ENCODE measurements at regions of chr11 and their contacts with region 1.

Region 1: DNA sequence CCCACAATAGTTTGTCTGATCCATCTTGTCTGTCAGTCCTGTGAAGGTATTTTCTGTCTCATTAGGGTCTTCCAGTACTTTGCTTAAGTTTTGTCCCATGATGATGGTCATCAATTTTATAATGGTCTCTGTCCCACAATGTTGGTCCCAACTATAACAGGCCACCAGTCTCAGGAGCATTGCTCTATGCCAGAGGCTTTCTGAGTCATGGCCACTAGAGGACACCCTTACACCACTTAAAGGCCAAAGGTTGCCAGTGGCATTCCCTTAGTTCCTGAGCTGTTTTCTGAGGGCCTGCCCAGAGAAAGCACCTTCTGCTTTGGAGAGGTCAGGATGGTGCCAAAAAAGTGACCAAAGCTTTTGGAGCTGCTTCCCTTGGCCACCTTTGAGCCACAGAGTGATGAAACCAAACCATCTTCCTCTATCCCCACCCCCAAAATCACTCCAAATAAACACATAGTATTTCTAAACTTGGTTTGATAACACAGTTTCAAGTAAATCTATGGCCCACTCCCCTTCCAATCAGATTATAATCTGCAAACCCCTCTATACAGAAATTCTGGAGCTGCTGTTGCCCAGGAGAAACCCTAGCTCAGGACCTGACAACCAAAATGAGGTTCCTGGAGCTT is 19.3 kb downstream of the EIF3F start:
- DNase-seq: peak; percentile 44
- H3K4me3 ChIP-seq: no peak overlapping the region
- H3K27ac ChIP-seq: no peak overlapping the region
- H3K27me3 ChIP-seq: peaks cover 5% of the 10 kb centered on the region
- CTCF ChIP-seq: peak; percentile 96

Region 2: DNA sequence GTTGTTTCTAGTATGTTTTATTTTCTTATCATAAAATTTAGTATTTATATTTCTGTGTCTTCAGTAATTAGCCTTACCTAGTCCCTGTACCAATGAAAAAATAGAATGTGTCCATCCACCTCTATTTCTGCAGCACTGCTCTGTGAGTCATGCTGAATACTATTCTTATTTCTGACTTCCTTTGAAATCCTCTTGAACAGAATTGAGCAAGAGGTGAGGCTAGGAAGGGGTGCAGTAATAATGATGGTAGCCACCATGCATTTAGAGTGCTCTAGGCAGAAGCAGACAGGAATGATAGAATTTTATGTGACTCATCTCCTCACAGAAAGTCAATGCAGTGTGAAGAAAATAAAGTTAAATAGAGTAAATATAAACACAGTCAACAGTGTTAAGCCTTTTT is 135.4 kb before region 1 on chr11:
- CTCF ChIA-PET with region 1: no interaction called
- POLR2A ChIA-PET with region 1: no interaction called
- DNase-seq: no peak
- H3K4me3 ChIP-seq: no peak overlapping the region
- H3K27ac ChIP-seq: no peak overlapping the region
- H3K27me3 ChIP-seq: no peaks in the 10 kb centered on the region
- CTCF ChIP-seq: no peak

Region 3: GRCh38 chr11:7986768-7987559 is 19.5 kb before region 1 on chr11 and contains the start of gene EIF3F:
- CTCF ChIA-PET with region 1: interaction called, 15 read pairs
- POLR2A ChIA-PET with region 1: no interaction called
- DNase-seq: peak; percentile 99
- H3K4me3 ChIP-seq: peak within 1 kb of the TSS; percentile 72
- H3K27ac ChIP-seq: peak within 1 kb of the TSS; percentile 53
- H3K27me3 ChIP-seq: no peaks in the 10 kb centered on the region
- CTCF ChIP-seq: peak; percentile 86
- polyA plus RNA-seq, gene EIF3F: 216 and 297 TPM in 2 replicates

Region 4: DNA sequence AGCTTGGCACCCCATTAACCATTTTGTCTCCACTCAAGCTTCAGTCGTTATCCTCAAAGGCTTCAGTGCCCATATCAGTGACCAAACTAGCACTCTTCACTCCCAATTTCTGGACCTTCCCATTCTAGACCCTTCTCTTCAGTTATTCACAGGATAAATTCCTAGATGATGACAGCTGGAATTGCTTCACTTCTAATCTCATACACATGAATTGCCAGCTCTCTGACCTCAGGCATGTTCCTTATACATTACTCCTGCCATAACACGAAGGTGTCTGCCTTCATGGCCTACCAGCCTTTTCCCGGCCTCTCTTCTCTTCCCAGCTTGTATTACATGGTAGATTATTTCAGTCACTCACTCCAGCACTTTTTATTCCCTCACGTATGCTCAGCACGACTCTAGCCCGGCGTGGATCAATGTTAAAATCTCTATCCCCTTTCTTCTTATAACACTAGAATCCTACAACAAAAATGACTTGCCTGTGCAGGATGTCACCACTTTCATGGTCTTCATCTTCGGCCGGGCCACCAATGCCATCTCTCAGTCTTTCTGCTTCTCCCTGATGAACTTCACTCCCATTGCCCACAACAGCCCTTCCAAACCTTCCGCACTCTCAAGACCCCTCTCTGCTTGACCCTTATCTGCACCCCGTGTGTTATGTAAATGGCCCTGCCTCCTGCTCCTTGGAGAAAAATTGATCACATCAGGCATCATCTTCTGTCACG is 17.5 kb after region 1 on chr11:
- CTCF ChIA-PET with region 1: interaction called, 30 read pairs
- POLR2A ChIA-PET with region 1: interaction called, 3 read pairs
- DNase-seq: no peak
- H3K4me3 ChIP-seq: no peak overlapping the region
- H3K27ac ChIP-seq: no peak overlapping the region
- H3K27me3 ChIP-seq: no peaks in the 10 kb centered on the region
- CTCF ChIP-seq: no peak

Region 5: DNA sequence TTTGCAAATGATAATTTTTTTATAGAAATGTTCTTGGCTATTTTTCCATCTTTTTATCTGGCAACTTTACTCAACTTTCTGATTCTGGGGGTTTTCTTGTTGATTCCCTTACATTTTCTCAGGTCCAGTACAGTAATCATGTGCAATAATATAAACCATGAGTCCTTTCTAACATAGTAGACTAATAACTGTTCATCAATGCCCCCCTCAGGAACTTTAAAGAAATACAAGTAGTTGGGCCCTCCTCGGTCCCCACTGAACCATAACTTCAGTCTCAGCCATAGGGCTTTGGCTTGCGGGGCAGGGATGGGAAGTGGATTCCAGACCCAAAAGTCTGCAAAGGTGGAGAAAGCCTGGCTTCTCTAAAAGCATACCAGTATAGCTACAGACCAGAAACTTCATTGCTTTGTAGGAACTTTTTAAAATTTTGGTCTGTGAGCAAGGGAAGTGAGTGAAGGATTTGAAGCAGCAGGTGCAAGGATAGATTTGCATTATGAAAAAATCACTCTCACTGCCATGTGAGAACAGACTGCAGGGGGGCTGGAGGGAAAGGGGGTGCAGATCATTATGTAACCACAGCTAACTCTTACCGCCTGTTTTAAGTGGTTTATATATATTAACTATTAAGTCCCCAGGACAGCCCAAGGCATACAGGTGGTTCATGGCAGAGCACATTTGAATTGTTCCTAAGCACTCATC is 64.1 kb after region 1 on chr11:
- CTCF ChIA-PET with region 1: interaction called, 27 read pairs
- POLR2A ChIA-PET with region 1: no interaction called
- DNase-seq: no peak
- H3K4me3 ChIP-seq: no peak overlapping the region
- H3K27ac ChIP-seq: no peak overlapping the region
- H3K27me3 ChIP-seq: peaks cover 2% of the 10 kb centered on the region
- CTCF ChIP-seq: peak; percentile 53

Region 6: DNA sequence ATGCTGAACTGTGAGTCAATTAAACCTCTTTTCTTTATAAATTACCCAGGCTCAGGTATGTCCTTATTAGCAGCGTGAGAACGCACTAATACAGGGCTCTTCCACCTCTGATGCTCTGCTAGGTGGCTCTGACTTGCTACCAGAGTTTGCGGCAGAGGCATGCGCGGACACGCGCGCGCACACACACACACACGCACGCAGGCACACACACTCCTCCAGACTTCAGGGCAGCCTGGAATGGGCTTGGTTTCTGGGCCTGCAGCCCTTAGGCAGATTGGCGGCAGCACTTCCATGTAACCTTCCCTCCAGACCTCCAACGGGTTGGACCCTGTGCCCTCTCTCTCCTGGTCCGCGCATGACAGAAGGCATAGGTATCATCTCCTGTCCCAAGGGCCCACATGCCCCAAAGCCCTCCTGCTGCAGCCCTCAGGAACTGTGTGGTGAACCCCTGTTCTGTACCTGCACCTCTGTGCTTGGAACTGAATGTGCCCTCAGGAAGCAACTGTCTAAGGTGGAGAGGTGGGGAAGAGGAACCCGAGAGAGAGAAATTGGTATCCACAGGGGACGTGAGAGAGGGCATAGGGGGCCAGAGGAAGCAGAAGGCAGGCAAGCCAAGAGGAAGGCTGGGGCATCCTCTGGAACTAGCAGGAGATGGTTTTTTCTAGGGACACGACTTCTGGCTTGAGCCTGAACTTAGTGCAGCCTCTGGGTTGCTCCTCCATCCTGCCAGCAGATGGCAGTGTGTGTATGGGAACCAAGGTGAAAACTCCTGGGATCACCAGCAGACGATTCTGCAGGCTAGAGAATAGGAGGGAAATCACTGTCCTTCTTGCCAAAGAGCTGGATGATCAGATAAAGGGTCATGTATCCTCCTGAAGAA is 185.8 kb after region 1 on chr11:
- CTCF ChIA-PET with region 1: interaction called, 13 read pairs
- POLR2A ChIA-PET with region 1: no interaction called
- DNase-seq: peak; percentile 32
- H3K4me3 ChIP-seq: no peak overlapping the region
- H3K27ac ChIP-seq: no peak overlapping the region
- H3K27me3 ChIP-seq: peaks cover 9% of the 10 kb centered on the region
- CTCF ChIP-seq: peak; percentile 91

Region 7: DNA sequence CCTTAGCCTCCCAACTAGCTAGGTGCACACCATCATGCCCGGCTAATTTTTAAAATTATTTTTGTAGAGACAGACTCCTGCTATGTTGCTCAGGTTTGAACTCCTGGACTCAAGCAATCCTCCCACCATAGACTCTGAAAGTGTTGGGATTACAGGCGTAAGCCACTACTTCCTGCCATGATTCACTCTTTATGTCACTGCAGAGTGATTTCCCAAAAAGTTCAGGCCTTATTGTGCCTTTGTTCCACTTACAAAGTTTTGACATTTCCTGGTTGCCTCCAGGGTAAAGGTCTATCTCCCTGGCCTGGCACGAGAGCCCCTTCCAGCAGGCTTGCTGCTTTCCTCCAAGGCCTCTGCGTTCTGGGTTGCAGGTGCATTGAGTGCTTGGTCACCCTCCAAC is 206.9 kb after region 1 on chr11:
- CTCF ChIA-PET with region 1: no interaction called
- POLR2A ChIA-PET with region 1: no interaction called
- DNase-seq: no peak
- H3K4me3 ChIP-seq: no peak overlapping the region
- H3K27ac ChIP-seq: no peak overlapping the region
- H3K27me3 ChIP-seq: peaks cover 18% of the 10 kb centered on the region
- CTCF ChIP-seq: no peak